Psoas muscle (tissue), 8 donors: ENCODE measurements at regions of chr11 and their contacts with region 1.

Region 1: GRCh38 chr11:112280268-112281126 is 19.8 kb upstream of the PLET1 start:
- DNase-seq: peak; percentile 33 to 61
- ATAC-seq: peak; percentile 89 to 97 (median 92)
- H3K4me3 ChIP-seq: peak overlapping the region; percentile 77
- H3K27ac ChIP-seq: peak overlapping the region; percentile 16
- H3K4me1 ChIP-seq: no peaks in the 10 kb centered on the region
- H3K27me3 ChIP-seq: no peaks in the 10 kb centered on the region
- CTCF ChIP-seq: peak; percentile 70

Region 2: DNA sequence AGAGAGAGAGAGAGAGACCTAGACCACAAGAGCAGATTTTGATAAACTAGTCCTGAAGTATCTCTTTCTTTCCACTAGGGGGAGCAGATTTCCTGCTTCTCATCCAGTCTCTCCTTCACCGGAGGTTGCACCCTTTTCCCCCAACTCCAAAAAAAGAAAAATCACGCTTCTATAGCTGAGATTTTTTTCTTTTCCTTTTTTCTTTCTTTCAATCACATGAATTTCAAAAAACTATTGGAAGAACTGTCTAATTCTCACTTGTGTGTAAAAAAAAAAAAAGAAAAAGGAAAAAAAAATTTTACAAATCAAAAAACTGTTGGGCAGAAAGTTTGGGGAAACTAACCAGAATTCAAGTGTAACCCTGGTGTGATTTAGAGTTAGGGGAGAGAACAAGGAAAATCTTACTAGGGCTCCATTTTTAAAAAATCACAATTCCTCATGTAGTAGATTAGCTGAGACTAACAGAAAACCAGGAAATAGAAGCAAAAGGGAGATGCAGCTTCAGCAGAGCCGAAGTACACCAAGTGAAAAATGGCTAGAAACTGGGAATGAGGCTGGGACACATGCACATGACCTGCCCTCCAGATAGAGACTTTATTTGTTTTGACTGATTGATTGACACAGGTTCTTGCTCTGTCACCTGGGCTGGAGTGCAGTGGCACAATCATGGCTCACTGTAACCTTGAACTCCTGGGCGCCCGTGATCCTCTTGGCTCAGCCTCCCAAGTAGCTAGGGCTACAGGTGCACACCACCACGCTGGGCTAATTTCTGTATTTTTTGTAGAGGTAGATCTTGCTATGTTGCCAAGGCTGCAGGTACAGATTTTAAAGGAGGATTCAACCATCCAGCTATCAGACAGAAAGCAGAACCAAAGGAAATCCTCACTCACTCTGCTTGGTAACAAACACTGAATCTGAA is 166.7 kb before region 1 on chr11:
- intact Hi-C with region 1: loop called in 1 of 2 experiments (anchors 5 kb)
- DNase-seq: no peak
- ATAC-seq: peak; percentile 75 to 89 (median 83)
- H3K4me3 ChIP-seq: no peak overlapping the region
- H3K27ac ChIP-seq: no peak overlapping the region
- H3K4me1 ChIP-seq: peaks cover 17% of the 10 kb centered on the region
- H3K27me3 ChIP-seq: no peaks in the 10 kb centered on the region
- CTCF ChIP-seq: peak; percentile 64

Region 3: DNA sequence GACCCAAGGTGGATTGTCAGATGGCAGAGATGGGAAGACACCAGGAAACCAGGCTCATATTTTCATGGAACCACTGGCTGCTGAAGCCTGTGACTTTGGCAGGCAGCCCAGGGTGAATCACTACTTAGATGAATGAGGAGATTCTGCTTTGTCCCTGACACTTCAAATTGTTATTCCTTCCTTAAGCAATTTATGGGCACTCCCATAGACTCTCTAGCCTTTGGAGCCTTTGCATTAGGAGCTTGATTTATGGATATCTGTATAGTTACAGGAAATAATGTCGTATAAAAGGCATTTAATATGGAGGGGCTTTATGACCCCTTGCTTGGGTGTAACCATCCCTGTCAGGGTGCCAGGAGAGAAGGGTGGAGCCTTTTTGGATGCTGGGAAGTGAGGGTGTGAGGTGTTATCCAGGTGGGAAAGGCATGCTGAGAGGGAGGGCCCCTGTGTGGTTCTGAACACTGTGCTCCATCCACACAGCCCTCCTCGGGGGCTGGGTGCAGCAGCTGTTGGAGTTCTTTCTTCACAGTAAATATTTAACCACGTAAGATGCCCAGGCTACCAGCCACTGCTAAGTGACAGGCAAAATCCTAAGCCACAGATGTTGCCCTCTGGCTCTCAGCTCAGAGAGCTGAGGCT is 151.9 kb before region 1 on chr11:
- intact Hi-C with region 1: loop called in 1 of 2 experiments (anchors 10 kb)
- DNase-seq: peak; percentile 73 to 75
- ATAC-seq: peak; percentile 55 to 75 (median 64)
- H3K4me3 ChIP-seq: no peak overlapping the region
- H3K27ac ChIP-seq: no peak overlapping the region
- H3K4me1 ChIP-seq: peaks cover 10% of the 10 kb centered on the region
- H3K27me3 ChIP-seq: no peaks in the 10 kb centered on the region
- CTCF ChIP-seq: no peak

Region 4: GRCh38 chr11:112219476-112220232 is 60.8 kb before region 1 on chr11:
- intact Hi-C with region 1: loop called (anchors 1 to 2 kb)
- DNase-seq: no peak
- ATAC-seq: peak; percentile 93 to 98 (median 96)
- H3K4me3 ChIP-seq: no peak overlapping the region
- H3K27ac ChIP-seq: no peak overlapping the region
- H3K4me1 ChIP-seq: no peaks in the 10 kb centered on the region
- H3K27me3 ChIP-seq: no peaks in the 10 kb centered on the region
- CTCF ChIP-seq: peak; percentile 76

Region 5: GRCh38 chr11:112229746-112230433 is 50.6 kb before region 1 on chr11:
- intact Hi-C with region 1: no loop called
- DNase-seq: no peak
- ATAC-seq: no peak
- H3K4me3 ChIP-seq: no peak overlapping the region
- H3K27ac ChIP-seq: no peak overlapping the region
- H3K4me1 ChIP-seq: peaks cover 14% of the 10 kb centered on the region
- H3K27me3 ChIP-seq: no peaks in the 10 kb centered on the region
- CTCF ChIP-seq: no peak